Activated B cell treated with CpG ODN at 0.5 μM for 24 hours (primary cell): ENCODE measurements at regions of chr6 and their contacts with region 1.

Region 1: GRCh38 chr6:5143634-5144311 is 58.6 kb downstream of the PPP1R3G start:
- DNase-seq: peak; percentile 69
- ATAC-seq: peak; percentile 53
- H3K4me3 Mint-ChIP-seq: no peak overlapping the region
- H3K27ac Mint-ChIP-seq: peak overlapping the region; percentile 46
- H3K4me1 Mint-ChIP-seq: peaks cover 27% of the 10 kb centered on the region
- H3K27me3 Mint-ChIP-seq: no peaks in the 10 kb centered on the region
- CTCF ChIP-seq: peak; percentile 98

Region 2: DNA sequence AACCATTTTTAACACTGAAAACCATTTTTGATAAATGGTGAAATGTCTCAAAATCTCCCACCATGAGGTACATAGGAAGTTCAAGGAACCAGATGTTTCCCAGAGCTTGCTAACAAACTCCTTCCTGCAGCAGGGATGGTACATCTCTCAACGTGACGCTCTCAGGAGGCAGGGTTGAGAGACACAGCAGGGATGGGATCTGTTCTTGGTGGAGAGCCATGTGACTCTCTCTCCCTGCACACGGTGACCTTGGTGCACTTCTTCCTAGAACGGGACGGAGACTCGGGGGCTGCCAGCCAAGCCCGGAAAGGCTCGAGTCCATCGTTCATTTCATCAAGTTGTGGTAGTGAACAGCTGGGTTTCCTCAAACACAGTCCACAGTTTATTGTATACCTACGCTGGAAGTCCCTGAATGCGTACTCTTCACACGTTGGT is 1200.4 kb before region 1 on chr6:
- CTCF ChIA-PET with region 1: no interaction called
- POLR2A ChIA-PET with region 1: no interaction called
- intact Hi-C with region 1: no loop called
- DNase-seq: no peak
- ATAC-seq: no peak
- H3K4me3 Mint-ChIP-seq: no peak overlapping the region
- H3K27ac Mint-ChIP-seq: no peak overlapping the region
- H3K4me1 Mint-ChIP-seq: no peaks in the 10 kb centered on the region
- H3K27me3 Mint-ChIP-seq: peaks cover 31% of the 10 kb centered on the region
- CTCF ChIP-seq: no peak

Region 3: GRCh38 chr6:4281341-4282293 is 862.2 kb before region 1 on chr6:
- CTCF ChIA-PET with region 1: no interaction called
- POLR2A ChIA-PET with region 1: no interaction called
- intact Hi-C with region 1: loop called (anchors 5 kb)
- DNase-seq: peak; percentile 60
- ATAC-seq: peak; percentile 97
- H3K4me3 Mint-ChIP-seq: peak overlapping the region; percentile 73
- H3K27ac Mint-ChIP-seq: peak overlapping the region; percentile 76
- H3K4me1 Mint-ChIP-seq: peaks cover 18% of the 10 kb centered on the region
- H3K27me3 Mint-ChIP-seq: peaks cover 26% of the 10 kb centered on the region
- CTCF ChIP-seq: no peak

Region 4: GRCh38 chr6:4402439-4402976 is 741.3 kb before region 1 on chr6:
- CTCF ChIA-PET with region 1: no interaction called
- POLR2A ChIA-PET with region 1: no interaction called
- intact Hi-C with region 1: no loop called
- DNase-seq: no peak
- ATAC-seq: no peak
- H3K4me3 Mint-ChIP-seq: no peak overlapping the region
- H3K27ac Mint-ChIP-seq: no peak overlapping the region
- H3K4me1 Mint-ChIP-seq: peaks cover 15% of the 10 kb centered on the region
- H3K27me3 Mint-ChIP-seq: peaks cover 14% of the 10 kb centered on the region
- CTCF ChIP-seq: no peak

Region 5: GRCh38 chr6:5103250-5103649 is 40.5 kb before region 1 on chr6:
- CTCF ChIA-PET with region 1: no interaction called
- POLR2A ChIA-PET with region 1: no interaction called
- intact Hi-C with region 1: no loop called
- DNase-seq: no peak
- ATAC-seq: no peak
- H3K4me3 Mint-ChIP-seq: no peak overlapping the region
- H3K27ac Mint-ChIP-seq: no peak overlapping the region
- H3K4me1 Mint-ChIP-seq: no peaks in the 10 kb centered on the region
- H3K27me3 Mint-ChIP-seq: no peaks in the 10 kb centered on the region
- CTCF ChIP-seq: no peak

Region 6: DNA sequence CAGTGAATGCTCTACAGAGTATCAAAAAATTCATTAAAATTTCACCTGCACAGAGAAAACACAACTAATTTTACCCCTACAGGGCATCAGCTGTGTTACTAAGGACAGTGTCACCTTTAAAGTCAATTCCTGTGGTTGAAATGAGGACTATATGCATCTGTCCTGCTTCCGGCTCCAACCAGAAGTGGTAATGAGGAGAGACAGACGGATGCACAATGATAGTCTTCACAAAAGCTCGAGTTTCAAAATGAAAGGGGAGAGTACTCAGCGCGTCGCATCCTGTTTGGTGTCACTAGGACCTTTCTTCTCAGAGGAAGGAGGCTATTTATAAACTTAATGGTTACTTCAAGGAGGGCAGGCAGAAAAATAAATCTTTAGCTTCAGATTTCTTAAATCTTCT is 30.5 kb after region 1 on chr6:
- CTCF ChIA-PET with region 1: interaction called, 15 read pairs
- POLR2A ChIA-PET with region 1: no interaction called
- intact Hi-C with region 1: no loop called
- DNase-seq: no peak
- ATAC-seq: peak; percentile 82
- H3K4me3 Mint-ChIP-seq: peak overlapping the region; percentile 75
- H3K27ac Mint-ChIP-seq: peak overlapping the region; percentile 79
- H3K4me1 Mint-ChIP-seq: peaks cover 30% of the 10 kb centered on the region
- H3K27me3 Mint-ChIP-seq: no peaks in the 10 kb centered on the region
- CTCF ChIP-seq: no peak

Region 7: GRCh38 chr6:5260661-5261544 is 117.1 kb after region 1 on chr6 and contains the starts of genes FARS2 and LYRM4:
- CTCF ChIA-PET with region 1: interaction called, 3 read pairs
- POLR2A ChIA-PET with region 1: interaction called, 4 read pairs
- intact Hi-C with region 1: loop called (anchors 2 kb)
- DNase-seq: peak; percentile 97
- ATAC-seq: peak; percentile 84
- H3K4me3 Mint-ChIP-seq: peak within 1 kb of the TSS; percentile 98
- H3K27ac Mint-ChIP-seq: peak within 1 kb of the TSS; percentile 100
- H3K4me1 Mint-ChIP-seq: peaks cover 27% of the 10 kb centered on the region
- H3K27me3 Mint-ChIP-seq: no peaks in the 10 kb centered on the region
- CTCF ChIP-seq: no peak
- total RNA-seq, gene FARS2: 28.2 and 32.7 TPM in 2 replicates
- total RNA-seq, gene LYRM4: 51.2 and 52.2 TPM in 2 replicates

Region 8: GRCh38 chr6:5379647-5380242 is 236.0 kb after region 1 on chr6:
- CTCF ChIA-PET with region 1: interaction called, 21 read pairs
- POLR2A ChIA-PET with region 1: no interaction called
- intact Hi-C with region 1: loop called (anchors 1 kb)
- DNase-seq: no peak
- ATAC-seq: peak; percentile 34
- H3K4me3 Mint-ChIP-seq: no peak overlapping the region
- H3K27ac Mint-ChIP-seq: no peak overlapping the region
- H3K4me1 Mint-ChIP-seq: peaks cover 3% of the 10 kb centered on the region
- H3K27me3 Mint-ChIP-seq: no peaks in the 10 kb centered on the region
- CTCF ChIP-seq: no peak

Region 9: DNA sequence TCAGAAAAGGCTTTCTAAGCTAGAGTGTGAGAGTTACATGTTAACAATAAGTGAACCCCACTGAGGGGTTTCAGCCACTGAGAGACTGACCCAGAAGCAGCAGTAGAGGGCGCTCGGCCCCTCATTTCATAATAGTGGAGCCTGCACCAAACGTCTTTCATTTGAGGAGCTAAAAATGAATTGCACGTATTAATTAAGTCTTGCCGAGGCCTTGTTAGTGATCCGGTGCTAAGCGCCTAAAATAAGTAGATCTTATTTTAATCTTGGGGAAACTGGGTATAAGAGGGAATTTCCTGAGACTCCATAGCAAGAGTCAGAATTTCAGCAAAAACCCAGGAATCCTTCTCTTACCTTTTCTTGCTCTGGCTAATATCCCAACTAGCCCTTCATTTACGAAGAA is 327.3 kb after region 1 on chr6:
- CTCF ChIA-PET with region 1: interaction called, 10 read pairs
- POLR2A ChIA-PET with region 1: no interaction called
- intact Hi-C with region 1: loop called (anchors 1 kb)
- DNase-seq: peak; percentile 24
- ATAC-seq: peak; percentile 70
- H3K4me3 Mint-ChIP-seq: no peak overlapping the region
- H3K27ac Mint-ChIP-seq: no peak overlapping the region
- H3K4me1 Mint-ChIP-seq: no peaks in the 10 kb centered on the region
- H3K27me3 Mint-ChIP-seq: no peaks in the 10 kb centered on the region
- CTCF ChIP-seq: no peak

Region 10: GRCh38 chr6:5514353-5514752 is 370.6 kb after region 1 on chr6:
- CTCF ChIA-PET with region 1: no interaction called
- POLR2A ChIA-PET with region 1: no interaction called
- intact Hi-C with region 1: no loop called
- DNase-seq: no peak
- ATAC-seq: no peak
- H3K4me3 Mint-ChIP-seq: no peak overlapping the region
- H3K27ac Mint-ChIP-seq: no peak overlapping the region
- H3K4me1 Mint-ChIP-seq: peaks cover 13% of the 10 kb centered on the region
- H3K27me3 Mint-ChIP-seq: no peaks in the 10 kb centered on the region
- CTCF ChIP-seq: no peak